ENCODE measurements at regions of chr1 and their contacts with region 1.

Region 1: GRCh38 chr1:15337656-15338402 is 71.9 kb upstream of the EFHD2 start:
- DNase-seq: peak in 1 of 3 donors; percentile 41
- ATAC-seq: peak; percentile 11
- H3K4me3 ChIP-seq: no peak overlapping the region
- H3K4me1 ChIP-seq: peaks cover 37% of the 10 kb centered on the region
- CTCF ChIP-seq: no peak

Region 2: DNA sequence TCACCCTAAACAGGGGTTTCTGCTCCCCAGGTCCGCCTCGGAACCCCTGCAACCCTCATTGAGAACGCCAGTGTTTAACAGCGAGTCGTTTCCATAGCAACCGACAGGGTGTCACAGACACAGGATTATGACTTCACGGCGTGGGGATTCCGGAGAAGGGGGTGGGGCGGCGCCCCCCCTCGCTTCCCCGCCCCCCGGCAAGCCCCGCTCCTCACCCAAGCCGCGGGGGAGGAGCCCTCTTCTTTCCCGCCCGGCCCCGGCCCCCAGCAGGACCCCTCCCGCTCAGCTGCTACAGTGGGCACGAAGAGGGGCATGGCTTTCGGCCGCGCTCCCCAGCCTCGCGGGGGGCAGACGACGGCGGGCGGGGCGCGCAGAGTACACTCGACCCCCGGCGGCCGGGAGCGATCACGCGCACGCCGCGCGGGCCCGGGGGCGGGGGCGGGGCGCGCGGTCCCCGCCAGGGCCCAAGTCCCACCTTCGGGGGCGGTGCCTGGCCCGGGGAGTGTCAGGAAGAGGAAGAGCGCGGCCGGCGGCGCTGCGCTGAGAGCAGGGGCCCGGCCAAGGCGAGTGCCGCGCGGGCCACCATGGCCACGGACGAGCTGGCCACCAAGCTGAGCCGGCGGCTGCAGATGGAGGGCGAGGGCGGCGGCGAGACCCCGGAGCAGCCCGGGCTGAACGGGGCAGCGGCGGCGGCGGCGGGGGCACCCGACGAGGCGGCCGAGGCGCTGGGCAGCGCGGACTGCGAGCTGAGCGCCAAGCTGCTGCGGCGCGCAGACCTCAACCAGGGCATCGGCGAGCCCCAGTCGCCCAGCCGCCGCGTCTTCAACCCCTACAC is 71.8 kb after region 1 on chr1 and contains the start of gene EFHD2:
- intact Hi-C with region 1: loop called in 1 of 2 experiments (anchors 5 kb)
- DNase-seq: peak; percentile 92
- ATAC-seq: peak; percentile 81
- H3K4me3 ChIP-seq: peak within 1 kb of the TSS; percentile 46
- H3K4me1 ChIP-seq: peaks cover 38% of the 10 kb centered on the region
- CTCF ChIP-seq: no peak
- total RNA-seq, gene EFHD2: 89.5 to 197 (median 154) TPM

Region 3: GRCh38 chr1:15489052-15489736 is 151.4 kb after region 1 on chr1:
- intact Hi-C with region 1: no loop called
- DNase-seq: no peak
- ATAC-seq: no peak
- H3K4me3 ChIP-seq: no peak overlapping the region
- H3K4me1 ChIP-seq: no peaks in the 10 kb centered on the region
- CTCF ChIP-seq: no peak